ENCODE measurements at regions of chr16 and their contacts with region 1.

Region 1: GRCh38 chr16:47475786-47476185 is 14.7 kb downstream of the PHKB start:
- DNase-seq: no peak
- ATAC-seq: no peak
- H3K4me3 ChIP-seq: no peak overlapping the region
- H3K4me3 Mint-ChIP-seq: no peak overlapping the region
- H3K27ac ChIP-seq: no peak overlapping the region
- H3K27ac Mint-ChIP-seq: no peak overlapping the region
- H3K4me1 ChIP-seq: peaks cover 7 to 14% of the 10 kb centered on the region in 2 donors
- H3K4me1 Mint-ChIP-seq: peaks cover 44% of the 10 kb centered on the region
- H3K27me3 ChIP-seq: no peaks in the 10 kb centered on the region
- H3K27me3 Mint-ChIP-seq: no peaks in the 10 kb centered on the region
- CTCF ChIP-seq: no peak

Region 2: GRCh38 chr16:47523342-47524006 is 47.7 kb after region 1 on chr16:
- CTCF ChIA-PET with region 1: interaction called, 3 read pairs
- POLR2A ChIA-PET with region 1: no interaction called
- intact Hi-C with region 1: loop called (anchors 5 kb)
- DNase-seq: peak; percentile 69
- ATAC-seq: peak; percentile 98
- H3K4me3 ChIP-seq: no peak overlapping the region
- H3K4me3 Mint-ChIP-seq: peak overlapping the region; percentile 29
- H3K27ac ChIP-seq: peak overlapping the region; percentile 7 to 60
- H3K27ac Mint-ChIP-seq: peak overlapping the region; percentile 51
- H3K4me1 ChIP-seq: peaks cover 12 to 15% of the 10 kb centered on the region in 2 donors
- H3K4me1 Mint-ChIP-seq: peaks cover 14% of the 10 kb centered on the region
- H3K27me3 ChIP-seq: no peaks in the 10 kb centered on the region
- H3K27me3 Mint-ChIP-seq: no peaks in the 10 kb centered on the region
- CTCF ChIP-seq: no peak